ENCODE measurements at regions of chr4 and their contacts with region 1.

Region 1: DNA sequence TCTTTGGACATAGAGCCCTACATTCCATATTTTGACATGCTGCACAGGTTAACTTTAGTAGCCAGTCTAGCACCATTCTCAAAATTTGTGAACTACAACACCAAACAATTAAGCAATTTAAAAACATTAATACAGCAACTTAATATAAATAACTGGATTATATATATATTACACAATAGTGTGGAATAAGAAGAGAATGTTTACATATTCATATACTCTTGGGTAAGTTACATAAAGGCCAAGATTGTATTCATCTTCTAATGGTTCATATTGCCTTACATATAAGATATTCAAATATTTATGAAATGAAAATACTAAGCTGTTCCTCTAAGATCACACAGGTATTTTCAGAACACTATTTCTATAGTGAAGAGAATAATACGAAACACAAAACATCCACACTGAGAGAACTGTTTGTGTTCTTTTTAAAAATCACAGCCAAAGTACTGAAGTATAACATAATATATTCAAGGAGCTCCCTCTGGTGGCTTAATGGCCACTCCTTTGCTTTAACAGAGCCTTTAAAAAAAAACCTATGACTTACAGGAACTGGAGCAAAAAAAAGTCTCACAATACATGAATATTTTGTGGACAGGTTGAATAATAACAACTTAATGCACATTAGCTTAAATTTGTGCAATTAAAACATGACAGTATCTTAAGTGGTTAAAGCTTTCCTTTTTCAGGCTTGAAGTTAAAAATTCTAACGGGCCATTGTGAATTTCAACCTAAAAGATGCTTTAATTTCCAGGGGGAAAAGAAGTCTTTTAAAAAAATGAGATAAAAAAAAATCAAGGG is 46.2 kb downstream of the NEK1 start:
- DNase-seq: no peak
- H3K4me3 Mint-ChIP-seq: no peak overlapping the region
- H3K27ac Mint-ChIP-seq: peak overlapping the region; percentile 44
- H3K4me1 Mint-ChIP-seq: peaks cover 6% of the 10 kb centered on the region
- H3K27me3 Mint-ChIP-seq: no peaks in the 10 kb centered on the region

Region 2: GRCh38 chr4:169582205-169582604 is 16.0 kb after region 1 on chr4:
- CTCF ChIA-PET with region 1: interaction called, 13 read pairs
- POLR2A ChIA-PET with region 1: no interaction called
- DNase-seq: no peak
- H3K4me3 Mint-ChIP-seq: no peak overlapping the region
- H3K27ac Mint-ChIP-seq: peak overlapping the region; percentile 17
- H3K4me1 Mint-ChIP-seq: peaks cover 7% of the 10 kb centered on the region
- H3K27me3 Mint-ChIP-seq: no peaks in the 10 kb centered on the region

Region 3: DNA sequence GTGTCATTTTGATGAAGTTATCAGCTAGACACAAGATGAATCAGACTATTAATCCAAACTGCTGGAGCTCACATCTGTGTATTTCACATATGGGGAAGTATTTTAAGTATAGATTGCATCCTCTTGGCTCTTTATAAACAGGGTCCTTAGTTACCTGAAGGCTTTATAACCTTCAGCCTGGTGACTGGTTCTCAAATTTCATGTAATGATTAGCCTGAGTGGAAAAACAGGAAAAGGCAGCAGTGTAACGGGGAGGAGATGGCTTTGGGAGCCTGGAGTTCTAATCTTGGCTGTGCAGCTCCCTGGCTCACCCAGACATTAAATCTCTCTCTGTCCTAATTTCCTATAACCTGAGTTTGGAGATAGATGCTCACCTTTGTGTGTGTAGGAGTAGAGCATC is 295.4 kb after region 1 on chr4:
- CTCF ChIA-PET with region 1: no interaction called
- POLR2A ChIA-PET with region 1: no interaction called
- DNase-seq: no peak
- H3K4me3 Mint-ChIP-seq: no peak overlapping the region
- H3K27ac Mint-ChIP-seq: no peak overlapping the region
- H3K4me1 Mint-ChIP-seq: no peaks in the 10 kb centered on the region
- H3K27me3 Mint-ChIP-seq: peaks cover 5% of the 10 kb centered on the region